ENCODE measurements at regions of chr20 and their contacts with region 1.

Region 1: DNA sequence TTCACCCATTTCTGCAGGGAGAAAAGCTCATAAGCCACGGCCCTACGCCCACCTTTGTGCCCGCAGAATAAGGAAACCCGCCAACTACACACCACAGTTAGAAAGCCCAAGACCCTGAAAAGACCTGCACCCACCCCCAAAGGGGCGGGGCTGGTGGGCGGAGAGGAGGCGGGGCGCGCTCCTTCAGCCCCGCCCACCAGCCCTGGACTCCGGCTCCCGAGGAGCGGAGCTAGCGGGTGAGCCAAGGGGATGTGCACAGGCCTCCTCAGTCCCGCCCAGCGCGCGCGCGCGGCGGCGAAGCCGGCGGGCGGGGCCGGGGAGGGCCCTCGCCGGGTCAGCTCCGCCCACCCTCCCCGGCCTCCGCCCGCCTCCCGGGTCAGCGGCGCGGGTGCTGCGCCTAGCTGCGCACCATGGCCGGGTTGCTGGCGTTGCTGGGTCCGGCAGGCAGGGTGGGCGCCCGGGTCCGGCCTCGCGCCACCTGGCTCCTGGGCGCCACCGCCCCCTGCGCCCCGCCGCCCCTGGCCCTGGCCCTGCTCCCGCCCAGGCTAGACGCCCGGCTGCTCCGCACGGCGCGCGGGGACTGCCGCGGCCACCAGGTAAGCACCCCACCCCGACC is at the start of gene FAM210B:
- DNase-seq: peak; percentile 80 to 85 (median 82)
- H3K4me3 ChIP-seq: peak within 1 kb of the TSS; percentile 52 to 81
- H3K4me3 Mint-ChIP-seq: peak within 1 kb of the TSS; percentile 90 to 94 (median 92)
- H3K27ac ChIP-seq: peak within 1 kb of the TSS; percentile 49
- H3K27ac Mint-ChIP-seq: peak within 1 kb of the TSS; percentile 29 to 88 (median 86)
- H3K4me1 ChIP-seq: peaks cover 12% of the 10 kb centered on the region
- H3K4me1 Mint-ChIP-seq: peaks cover 10 to 36% (median 25%) of the 10 kb centered on the region in 4 donors
- H3K27me3 ChIP-seq: no peaks in the 10 kb centered on the region
- H3K27me3 Mint-ChIP-seq: no peaks in the 10 kb centered on the region
- total RNA-seq, gene FAM210B: 28.7 to 32.0 TPM

Region 2: GRCh38 chr20:56328853-56329252 is 29.9 kb before region 1 on chr20:
- CTCF ChIA-PET with region 1: no interaction called
- POLR2A ChIA-PET with region 1: no interaction called
- intact Hi-C with region 1: no loop called
- DNase-seq: peak in 1 of 5 donors; percentile 4
- H3K4me3 ChIP-seq: no peak overlapping the region
- H3K4me3 Mint-ChIP-seq: no peak overlapping the region
- H3K27ac ChIP-seq: no peak overlapping the region
- H3K27ac Mint-ChIP-seq: no peak overlapping the region
- H3K4me1 ChIP-seq: no peaks in the 10 kb centered on the region
- H3K4me1 Mint-ChIP-seq: no peaks in the 10 kb centered on the region
- H3K27me3 ChIP-seq: no peaks in the 10 kb centered on the region
- H3K27me3 Mint-ChIP-seq: peaks cover 9 to 38% of the 10 kb centered on the region in 2 donors

Region 3: DNA sequence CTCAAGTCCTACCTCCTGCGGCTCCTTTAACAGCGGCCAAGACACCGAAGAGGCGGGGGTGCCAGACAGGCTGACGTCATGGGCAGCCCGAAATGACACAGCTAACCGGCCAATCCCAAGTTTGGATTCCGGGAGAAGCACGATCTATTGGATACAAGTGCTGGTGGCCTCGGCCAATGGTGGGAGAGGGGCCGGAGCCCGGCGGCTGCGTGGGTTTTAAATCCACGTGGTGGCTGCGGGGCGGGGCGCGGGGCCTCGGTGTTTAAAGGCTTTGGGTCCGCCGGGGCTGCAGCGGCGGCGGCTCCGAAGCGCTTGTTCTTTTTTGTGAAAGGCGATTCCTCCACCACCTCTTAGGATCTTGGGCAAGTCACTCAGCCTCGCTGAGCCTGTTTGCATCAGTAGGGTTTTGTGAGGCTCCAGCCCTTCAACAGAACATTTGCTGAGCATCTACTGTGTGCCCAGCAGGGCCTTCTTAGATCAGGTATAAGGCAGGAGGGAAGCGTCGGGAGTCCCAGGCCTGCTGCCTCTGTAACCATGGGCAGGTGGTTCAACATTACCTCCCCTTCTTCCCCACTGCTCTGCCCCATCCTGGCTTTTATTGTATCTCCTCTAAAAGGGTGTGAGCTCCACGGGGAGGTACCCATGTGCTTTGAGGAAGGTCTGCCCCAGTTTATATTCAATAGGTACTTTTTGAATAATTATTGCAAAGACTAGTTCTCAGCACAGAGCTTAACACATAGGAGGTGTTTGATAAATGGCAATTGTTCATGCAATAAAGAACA is 1360.0 kb after region 1 on chr20:
- CTCF ChIA-PET with region 1: no interaction called
- POLR2A ChIA-PET with region 1: no interaction called
- intact Hi-C with region 1: loop called (anchors 10 kb)
- DNase-seq: peak; percentile 85 to 95 (median 88)
- H3K4me3 ChIP-seq: no peak overlapping the region
- H3K4me3 Mint-ChIP-seq: peak overlapping the region; percentile 57 to 78 (median 70)
- H3K27ac ChIP-seq: no peak overlapping the region
- H3K27ac Mint-ChIP-seq: peak overlapping the region; percentile 53 to 87 (median 78)
- H3K4me1 ChIP-seq: peaks cover 7% of the 10 kb centered on the region
- H3K4me1 Mint-ChIP-seq: peaks cover 2 to 12% (median 7%) of the 10 kb centered on the region in 4 donors
- H3K27me3 ChIP-seq: no peaks in the 10 kb centered on the region
- H3K27me3 Mint-ChIP-seq: peaks cover 7 to 12% of the 10 kb centered on the region in 2 donors